A673 (cell line): ENCODE measurements at regions of chr1 and their contacts with region 1.

Region 1: GRCh38 chr1:82161700-82162141 is 361.0 kb downstream of the ADGRL2 start:
- DNase-seq: peak; percentile 70
- H3K4me3 ChIP-seq: peak overlapping the region; percentile 29
- H3K27ac ChIP-seq: no peak overlapping the region
- H3K4me1 ChIP-seq: peaks cover 20% of the 10 kb centered on the region
- H3K27me3 ChIP-seq: no peaks in the 10 kb centered on the region
- CTCF ChIP-seq: no peak

Region 2: DNA sequence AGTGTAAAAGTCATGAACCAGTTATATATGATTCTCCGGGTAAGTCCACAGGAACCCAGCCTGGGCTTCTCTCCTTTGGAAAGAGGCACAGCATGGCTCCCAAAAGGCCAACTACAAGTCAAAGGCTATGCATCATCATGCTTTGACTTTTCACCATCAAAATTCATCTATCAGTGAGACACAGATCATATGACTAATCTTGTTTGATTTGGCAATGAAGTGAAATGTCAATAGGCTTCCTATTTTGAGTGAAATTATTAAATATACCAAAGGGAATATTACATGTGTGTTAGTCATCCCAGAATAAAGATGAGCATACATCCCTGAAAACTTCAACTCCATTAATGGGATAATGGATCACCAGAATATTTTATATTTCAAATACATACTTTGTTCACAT is 444.5 kb before region 1 on chr1:
- CTCF ChIA-PET with region 1: no interaction called
- POLR2A ChIA-PET with region 1: no interaction called
- intact Hi-C with region 1: loop called (anchors 5 kb)
- DNase-seq: no peak
- H3K4me3 ChIP-seq: no peak overlapping the region
- H3K27ac ChIP-seq: no peak overlapping the region
- H3K4me1 ChIP-seq: peaks cover 13% of the 10 kb centered on the region
- H3K27me3 ChIP-seq: no peaks in the 10 kb centered on the region
- CTCF ChIP-seq: no peak

Region 3: GRCh38 chr1:82695443-82695842 is 533.7 kb after region 1 on chr1:
- CTCF ChIA-PET with region 1: no interaction called
- POLR2A ChIA-PET with region 1: no interaction called
- intact Hi-C with region 1: no loop called
- DNase-seq: no peak
- H3K4me3 ChIP-seq: no peak overlapping the region
- H3K27ac ChIP-seq: no peak overlapping the region
- H3K4me1 ChIP-seq: no peaks in the 10 kb centered on the region
- H3K27me3 ChIP-seq: no peaks in the 10 kb centered on the region
- CTCF ChIP-seq: no peak